PC-3 (cell line): ENCODE measurements at regions of chr7 and their contacts with region 1.

Region 1: DNA sequence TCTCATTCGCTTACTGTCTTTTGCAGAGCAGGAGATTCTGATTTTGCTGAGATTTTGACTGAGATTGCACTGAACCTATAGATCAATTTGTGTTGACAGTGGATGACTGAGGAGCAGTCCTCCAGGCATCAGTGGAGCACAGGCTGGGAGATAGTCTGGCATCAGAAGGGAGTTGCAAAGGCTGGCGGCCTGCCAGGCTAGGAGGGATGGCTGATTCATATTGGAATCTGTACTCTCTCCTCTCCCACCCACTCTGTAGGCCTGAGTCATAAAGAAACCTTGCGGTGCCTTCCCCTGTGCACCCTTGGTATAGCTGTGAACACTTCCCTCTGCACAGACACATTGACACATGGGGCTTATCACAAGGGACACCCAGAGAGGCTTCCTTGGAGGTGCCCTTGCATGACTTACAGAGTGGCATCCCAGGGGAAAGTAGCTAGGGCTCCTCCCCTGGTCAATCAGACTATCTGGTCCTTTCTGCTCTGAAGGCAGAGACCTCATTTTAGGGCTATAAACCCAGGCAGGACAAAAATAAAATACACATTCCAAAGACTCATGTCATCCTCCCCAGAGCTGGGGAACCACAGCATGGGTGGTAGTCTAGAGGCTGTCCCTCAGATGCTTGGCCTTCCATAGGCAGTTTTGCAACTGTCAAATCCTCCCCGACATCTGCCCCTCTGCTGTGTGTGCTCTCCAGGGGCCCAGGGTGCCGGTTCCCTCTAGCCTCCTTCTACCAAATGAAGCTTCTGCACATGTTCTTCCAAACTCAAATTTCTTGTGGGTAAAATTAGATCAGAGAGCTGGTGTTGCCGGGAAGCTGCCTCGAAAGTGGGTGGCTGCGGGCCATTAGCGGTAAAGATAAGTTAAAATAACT is 37.4 kb upstream of the EEPD1 start:
- DNase-seq: peak; percentile 97
- ATAC-seq: peak; percentile 89
- H3K4me3 ChIP-seq: peak overlapping the region; percentile 17; the same call in 1 of the 2 replicates
- H3K27ac ChIP-seq: peak overlapping the region; percentile 95
- H3K4me1 ChIP-seq: peaks cover 51% of the 10 kb centered on the region
- H3K27me3 ChIP-seq: no peaks in the 10 kb centered on the region
- CTCF ChIP-seq: no peak

Region 2: DNA sequence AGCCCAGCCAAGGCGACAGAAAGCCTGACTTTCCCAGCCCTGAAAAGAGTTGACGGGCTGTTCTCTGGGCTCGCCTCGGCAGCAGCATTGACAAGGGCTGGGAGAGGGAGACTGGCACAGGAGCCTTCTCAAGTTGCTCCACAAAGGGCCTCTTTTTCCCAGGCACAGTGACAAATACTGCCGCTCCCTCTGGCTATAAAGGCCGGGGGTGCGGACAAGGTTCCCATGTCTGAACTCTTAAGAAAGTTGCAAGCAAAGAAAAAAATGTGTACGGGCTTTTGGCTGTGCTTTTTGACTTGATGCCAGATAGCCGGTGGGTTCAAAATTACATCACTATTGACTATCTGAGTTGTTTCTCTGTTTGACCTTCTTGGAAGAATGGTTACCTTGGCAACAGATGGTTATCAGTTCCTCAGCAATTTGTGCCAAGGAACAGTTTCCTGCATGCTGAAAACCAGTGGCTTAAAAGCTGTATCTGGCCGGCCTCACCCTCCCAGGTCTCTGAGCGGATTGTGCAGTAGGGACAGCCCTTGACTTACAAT is 78.5 kb before region 1 on chr7:
- CTCF ChIA-PET with region 1: interaction called, 7 read pairs
- POLR2A ChIA-PET with region 1: interaction called, 6 read pairs
- intact Hi-C with region 1: loop called (anchors 1 kb)
- DNase-seq: peak; percentile 99
- ATAC-seq: peak; percentile 68
- H3K4me3 ChIP-seq: peak overlapping the region; percentile 39
- H3K27ac ChIP-seq: peak overlapping the region; percentile 100
- H3K4me1 ChIP-seq: peaks cover 69% of the 10 kb centered on the region
- H3K27me3 ChIP-seq: no peaks in the 10 kb centered on the region
- CTCF ChIP-seq: no peak